ENCODE measurements at regions of chr14 and their contacts with region 1.

Region 1: DNA sequence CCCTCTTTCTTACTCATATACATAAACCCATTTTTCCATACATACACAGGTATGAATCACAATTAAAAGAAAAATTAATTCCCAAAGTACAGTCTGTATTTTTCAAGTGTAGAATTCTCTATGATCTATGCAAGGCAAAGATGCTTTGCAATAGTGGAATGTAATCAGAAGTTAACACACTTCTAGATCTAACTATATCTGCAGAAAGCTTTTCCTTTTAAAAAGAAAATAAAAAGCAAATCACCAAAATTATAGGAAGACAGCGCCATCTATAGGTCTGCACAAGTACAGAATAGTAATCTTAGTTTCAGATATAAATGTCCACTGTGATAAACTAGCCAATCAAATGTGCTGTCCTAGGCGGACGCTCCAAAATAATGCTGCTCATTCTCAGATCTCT is 22.0 kb downstream of the SLC25A21 start:
- DNase-seq: peak; percentile 44 to 50
- ATAC-seq: peak; percentile 82 to 91; a peak in 5 of 6 replicates
- H3K4me3 ChIP-seq: no peak overlapping the region
- H3K27ac ChIP-seq: no peak overlapping the region
- H3K4me1 ChIP-seq: no peaks in the 10 kb centered on the region
- CTCF ChIP-seq: peak; percentile 82
- EP300 ChIP-seq: no peak
- POLR2A ChIP-seq: no peak
- RAD21 ChIP-seq: peak; percentile 75 to 81

Region 2: GRCh38 chr14:36553656-36554260 is 596.7 kb before region 1 on chr14:
- CTCF ChIA-PET with region 1: interaction called, 54 read pairs
- POLR2A ChIA-PET with region 1: no interaction called
- DNase-seq: peak; percentile 29 to 64
- ATAC-seq: peak; percentile 68 to 86; a peak in 4 of 6 replicates
- H3K4me3 ChIP-seq: no peak overlapping the region
- H3K27ac ChIP-seq: no peak overlapping the region
- H3K4me1 ChIP-seq: no peaks in the 10 kb centered on the region
- CTCF ChIP-seq: peak; percentile 81
- EP300 ChIP-seq: no peak
- POLR2A ChIP-seq: no peak
- RAD21 ChIP-seq: peak; percentile 63 to 65

Region 3: DNA sequence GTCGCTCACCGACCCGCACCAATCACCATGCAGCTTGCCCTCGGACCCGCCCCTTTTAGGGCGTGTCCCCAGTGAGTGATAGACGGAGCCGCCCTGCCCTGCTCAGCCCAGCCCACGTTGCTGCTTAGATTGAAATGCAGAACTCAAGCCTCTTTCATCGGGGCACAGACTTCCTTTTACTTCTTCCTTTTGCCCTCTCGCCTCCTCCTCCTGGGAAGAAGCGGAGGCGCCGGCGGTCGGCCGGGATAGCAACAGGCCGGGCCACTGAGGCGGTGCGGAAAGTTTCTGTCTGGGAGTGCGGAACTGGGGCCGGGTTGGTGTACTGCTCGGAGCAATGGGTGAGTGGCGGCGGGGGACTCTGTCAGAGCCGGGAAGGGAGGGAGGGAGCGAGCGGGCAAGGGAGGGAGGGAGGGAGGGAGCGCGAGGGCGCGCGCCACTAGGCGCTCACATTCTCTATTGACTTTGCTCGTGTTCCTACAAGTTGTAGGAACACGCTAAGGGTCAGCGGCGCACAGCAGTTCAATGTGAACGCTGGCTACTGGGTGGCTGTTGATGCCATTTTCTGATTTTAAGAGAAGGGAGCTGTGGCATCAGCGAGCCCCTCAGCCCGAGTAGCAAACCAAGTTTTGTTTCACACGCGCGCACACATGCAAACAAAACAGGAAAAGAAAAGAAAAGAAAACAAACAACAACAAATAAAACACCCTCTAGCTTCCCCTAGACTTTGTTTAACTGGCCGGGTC is 488.5 kb before region 1 on chr14 and contains the start of gene PAX9:
- CTCF ChIA-PET with region 1: interaction called, 26 read pairs
- POLR2A ChIA-PET with region 1: no interaction called
- DNase-seq: peak; percentile 88 to 91
- ATAC-seq: peak; percentile 92 to 98
- H3K4me3 ChIP-seq: peak within 1 kb of the TSS; percentile 66
- H3K27ac ChIP-seq: peak within 1 kb of the TSS; percentile 71 to 84
- H3K4me1 ChIP-seq: peaks cover 6% of the 10 kb centered on the region; the same call in 1 of the 3 replicates
- CTCF ChIP-seq: no peak
- EP300 ChIP-seq: no peak
- POLR2A ChIP-seq: peak; percentile 22; the same call in 1 of the 2 replicates
- RAD21 ChIP-seq: no peak
- polyA plus RNA-seq, gene PAX9: 1.4 and 1.8 TPM in 2 replicates

Region 4: DNA sequence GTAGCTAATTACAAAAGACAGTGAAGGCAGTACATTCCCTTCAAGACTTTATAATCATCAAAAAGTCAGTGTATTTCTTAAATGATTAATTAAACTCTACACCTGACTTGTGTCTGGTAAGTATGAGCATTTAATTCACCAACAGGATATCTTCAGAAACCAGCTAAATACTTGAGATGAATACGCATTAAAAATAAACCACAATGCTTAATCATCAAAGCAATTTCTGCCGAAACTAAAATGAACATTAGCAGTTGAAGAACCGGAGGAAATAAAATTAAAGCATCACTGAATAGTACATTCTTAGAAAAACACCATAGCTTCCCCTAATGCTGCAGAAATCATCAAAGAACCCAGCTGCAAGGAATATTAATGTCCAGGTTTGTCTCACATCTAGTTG is 10.7 kb before region 1 on chr14:
- CTCF ChIA-PET with region 1: interaction called, 32 read pairs
- POLR2A ChIA-PET with region 1: no interaction called
- DNase-seq: no peak
- ATAC-seq: no peak
- H3K4me3 ChIP-seq: no peak overlapping the region
- H3K27ac ChIP-seq: no peak overlapping the region
- H3K4me1 ChIP-seq: no peaks in the 10 kb centered on the region
- CTCF ChIP-seq: no peak
- EP300 ChIP-seq: no peak
- POLR2A ChIP-seq: no peak
- RAD21 ChIP-seq: no peak

Region 5: DNA sequence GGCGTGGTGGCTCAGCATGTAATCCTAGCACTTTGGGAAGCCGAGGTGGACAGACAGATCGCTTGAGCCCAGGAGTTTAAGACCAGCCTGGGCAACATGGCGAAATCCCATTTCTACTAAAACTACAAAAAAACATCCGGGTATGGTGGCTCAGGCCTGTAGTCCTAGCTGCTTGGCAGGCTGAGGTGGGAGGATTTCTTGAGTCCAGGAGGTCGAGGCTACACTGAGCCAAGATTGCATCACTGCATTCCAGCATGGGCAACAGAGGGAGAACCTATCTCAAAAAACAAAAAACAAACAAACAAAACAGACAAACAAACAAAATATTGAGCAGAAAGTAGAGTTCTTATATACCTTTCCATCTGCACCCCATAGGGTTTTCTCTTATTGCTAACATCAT is 31.0 kb after region 1 on chr14:
- CTCF ChIA-PET with region 1: interaction called, 10 read pairs
- POLR2A ChIA-PET with region 1: no interaction called
- DNase-seq: no peak
- ATAC-seq: no peak
- H3K4me3 ChIP-seq: no peak overlapping the region
- H3K27ac ChIP-seq: no peak overlapping the region
- H3K4me1 ChIP-seq: no peaks in the 10 kb centered on the region
- CTCF ChIP-seq: no peak
- EP300 ChIP-seq: no peak
- POLR2A ChIP-seq: no peak
- RAD21 ChIP-seq: no peak

Measured in A549 (cell line).